ENCODE measurements at regions of chr3 and their contacts with region 1.

Region 1: GRCh38 chr3:185176750-185177359 is 24.0 kb upstream of the C3orf70 start:
- DNase-seq: peak; percentile 54
- H3K4me3 Mint-ChIP-seq: no peak overlapping the region
- H3K27ac Mint-ChIP-seq: no peak overlapping the region
- H3K4me1 Mint-ChIP-seq: no peaks in the 10 kb centered on the region
- H3K27me3 Mint-ChIP-seq: peaks cover 11% of the 10 kb centered on the region

Region 2: DNA sequence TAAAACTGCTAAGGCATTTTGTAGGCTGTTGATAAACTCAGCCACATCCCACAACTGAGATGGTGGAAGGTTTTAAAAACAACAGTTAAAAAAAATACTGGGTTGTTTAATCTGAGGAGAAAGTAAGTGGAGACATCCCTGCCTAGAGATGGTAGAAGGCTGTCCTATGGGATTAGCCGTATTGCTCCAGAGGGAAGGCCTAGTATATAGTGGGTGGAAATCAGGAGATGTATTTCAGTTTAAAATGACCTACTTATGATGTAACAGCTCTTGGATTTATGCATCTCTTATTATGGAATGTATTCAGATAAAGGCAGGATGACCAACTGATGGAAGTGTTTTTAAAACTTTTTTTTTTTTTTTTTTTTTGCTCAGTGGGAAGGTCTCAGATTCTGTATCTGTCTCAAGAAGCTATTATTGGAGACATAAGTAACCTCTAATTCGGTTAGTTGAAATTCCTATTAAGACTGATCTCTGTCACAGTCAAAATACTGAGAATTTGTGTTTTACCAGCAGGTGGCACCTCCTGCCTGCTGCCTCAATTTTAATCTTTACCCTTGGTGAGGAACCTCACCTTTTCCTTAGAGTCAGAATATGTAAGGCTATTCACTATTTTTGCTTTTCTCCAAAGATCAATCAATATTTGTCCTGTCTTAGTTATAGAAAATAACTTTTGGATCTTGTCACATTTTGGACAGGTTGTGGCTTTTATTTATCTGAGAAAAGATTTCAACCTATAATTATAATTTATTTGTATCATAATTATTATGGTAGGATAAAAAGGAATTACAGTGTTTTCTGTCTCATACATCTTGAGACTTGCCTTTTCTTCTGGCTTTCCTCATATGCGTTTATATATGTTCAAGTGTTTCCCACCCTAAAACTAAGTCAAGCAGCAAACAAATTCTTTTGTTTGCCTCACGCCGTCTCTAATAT is 301.9 kb before region 1 on chr3:
- CTCF ChIA-PET with region 1: interaction called, 13 read pairs
- DNase-seq: peak; percentile 30
- H3K4me3 Mint-ChIP-seq: no peak overlapping the region
- H3K27ac Mint-ChIP-seq: no peak overlapping the region
- H3K4me1 Mint-ChIP-seq: peaks cover 11% of the 10 kb centered on the region
- H3K27me3 Mint-ChIP-seq: no peaks in the 10 kb centered on the region

Region 3: DNA sequence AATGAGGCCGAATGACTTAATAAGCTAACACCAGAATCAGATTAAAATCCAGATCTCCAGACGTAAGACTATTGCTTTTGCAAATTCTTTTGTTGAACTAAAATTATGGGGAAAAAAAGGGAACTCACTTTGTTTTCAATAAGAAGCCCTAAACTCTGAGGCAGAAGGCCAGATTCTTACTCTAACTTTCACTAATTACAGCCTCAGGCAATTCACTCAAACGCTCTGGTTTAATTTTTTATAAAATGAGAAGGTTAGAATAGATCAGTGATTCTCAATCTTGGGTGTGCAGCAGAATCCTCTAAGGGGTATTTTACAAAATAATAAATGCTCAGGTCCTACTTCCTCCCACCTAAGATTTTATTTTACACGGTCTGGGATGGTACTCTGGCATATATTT is 62.1 kb before region 1 on chr3:
- CTCF ChIA-PET with region 1: no interaction called
- DNase-seq: no peak
- H3K4me3 Mint-ChIP-seq: no peak overlapping the region
- H3K27ac Mint-ChIP-seq: no peak overlapping the region
- H3K4me1 Mint-ChIP-seq: no peaks in the 10 kb centered on the region
- H3K27me3 Mint-ChIP-seq: peaks cover 8% of the 10 kb centered on the region

Measured in activated naive CD4-positive, alpha-beta T cell treated with anti-CD3 and anti-CD28 coated beads, Interleukin-2, amount 10 ng/mL, durations not matched to agents 7 days and 5 days (primary cell).